A549 (cell line): ENCODE measurements at regions of chr19 and their contacts with region 1.

Region 1: GRCh38 chr19:1064661-1065605 is 2.0 kb upstream of the ARHGAP45 start:
- DNase-seq: peak; percentile 44 to 77
- ATAC-seq: peak; percentile 71 to 87
- H3K4me3 ChIP-seq: no peak overlapping the region
- H3K27ac ChIP-seq: peak overlapping the region; percentile 53 to 75; a peak in 5 of 6 replicates
- H3K4me1 ChIP-seq: peaks cover 33% of the 10 kb centered on the region
- CTCF ChIP-seq: peak; percentile 49
- EP300 ChIP-seq: no peak
- POLR2A ChIP-seq: no peak
- RAD21 ChIP-seq: peak; percentile 32 to 41; a peak in 3 of 5 replicates

Region 2: DNA sequence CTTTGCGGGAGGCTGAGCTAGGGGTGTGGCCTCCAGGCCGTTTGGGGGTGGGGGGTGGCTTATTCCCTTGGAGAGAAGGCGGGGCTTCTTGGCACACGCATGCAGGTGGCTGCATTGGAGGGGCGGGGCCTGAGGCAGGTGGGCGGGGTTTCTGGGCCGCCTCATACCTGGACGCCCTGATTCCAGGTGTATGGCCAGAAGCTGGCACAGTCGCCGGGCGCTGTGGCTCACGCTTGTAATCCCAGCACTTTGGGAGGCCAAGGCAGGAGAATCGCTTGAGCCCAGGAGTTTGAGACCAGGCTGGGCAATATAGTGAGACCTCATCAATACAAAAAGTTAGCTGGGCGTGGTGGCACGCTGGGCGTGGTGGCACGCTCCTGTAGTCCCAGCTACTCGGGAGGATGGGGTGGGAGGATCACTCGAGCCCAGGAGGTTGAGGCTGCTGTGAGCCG is 17.2 kb before region 1 on chr19:
- CTCF ChIA-PET with region 1: interaction called, 12 read pairs
- POLR2A ChIA-PET with region 1: interaction called, 3 read pairs
- DNase-seq: no peak
- ATAC-seq: no peak
- H3K4me3 ChIP-seq: no peak overlapping the region
- H3K27ac ChIP-seq: no peak overlapping the region
- H3K4me1 ChIP-seq: peaks cover 9% of the 10 kb centered on the region
- CTCF ChIP-seq: no peak
- EP300 ChIP-seq: no peak
- POLR2A ChIP-seq: no peak
- RAD21 ChIP-seq: no peak

Region 3: GRCh38 chr19:1205114-1206062 is 140.5 kb after region 1 on chr19 and contains the start of gene STK11:
- CTCF ChIA-PET with region 1: no interaction called
- POLR2A ChIA-PET with region 1: no interaction called
- DNase-seq: peak; percentile 94 to 95
- ATAC-seq: peak; percentile 97
- H3K4me3 ChIP-seq: peak within 1 kb of the TSS; percentile 97
- H3K27ac ChIP-seq: peak within 1 kb of the TSS; percentile 95 to 100
- H3K4me1 ChIP-seq: peaks cover 24% of the 10 kb centered on the region
- CTCF ChIP-seq: no peak
- EP300 ChIP-seq: no peak
- POLR2A ChIP-seq: peak; percentile 20
- RAD21 ChIP-seq: no peak
- polyA plus RNA-seq, gene STK11: 12.2 and 16.2 TPM in 2 replicates